ENCODE measurements at regions of chr5 and their contacts with region 1.

Region 1: DNA sequence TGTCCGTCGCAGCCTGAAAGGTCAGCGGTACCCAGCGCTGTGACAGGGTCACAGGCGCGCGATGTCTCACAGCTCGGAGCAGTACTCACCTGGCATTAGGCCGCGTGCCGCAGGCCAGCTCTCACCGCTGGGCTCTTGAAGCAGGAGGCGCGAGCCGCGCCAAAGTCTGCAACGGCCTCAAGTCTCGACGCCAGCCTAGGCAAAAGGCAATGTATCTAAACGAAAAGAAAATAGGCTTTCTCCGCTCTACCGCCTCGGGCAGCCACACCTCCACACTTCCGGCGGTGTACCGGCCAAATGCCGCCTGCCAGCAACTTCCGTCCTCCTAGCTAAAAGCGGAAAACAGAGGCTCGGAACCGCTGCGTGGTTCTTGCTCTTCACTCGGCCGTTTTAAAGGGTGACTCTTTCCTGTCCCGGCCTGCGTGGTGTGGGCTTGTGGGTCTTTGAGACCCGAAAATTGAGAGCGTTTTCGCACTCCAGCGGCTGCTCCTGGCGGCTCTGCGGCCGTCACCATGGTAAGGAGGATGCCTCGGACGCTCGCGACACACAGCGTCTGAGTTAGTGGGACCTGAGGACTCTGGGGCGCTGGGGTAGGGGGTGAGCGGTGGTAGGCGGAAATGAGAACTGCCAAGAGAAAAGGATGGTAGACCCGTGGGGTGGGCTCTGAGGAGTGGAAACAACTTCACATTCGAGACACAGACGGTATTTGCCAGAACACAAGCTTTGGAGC is at the starts of genes GFM2 and NSA2:
- DNase-seq: peak; percentile 91
- H3K4me3 ChIP-seq: peak within 1 kb of the TSS; percentile 59 to 99 (median 87)
- H3K27ac ChIP-seq: peak within 1 kb of the TSS; percentile 74
- H3K4me1 ChIP-seq: peaks cover 39% of the 10 kb centered on the region
- H3K27me3 ChIP-seq: no peaks in the 10 kb centered on the region
- CTCF ChIP-seq: no peak
- total RNA-seq, gene GFM2: 26.4 to 47.2 TPM
- total RNA-seq, gene NSA2: 38.2 to 66.6 TPM

Region 2: DNA sequence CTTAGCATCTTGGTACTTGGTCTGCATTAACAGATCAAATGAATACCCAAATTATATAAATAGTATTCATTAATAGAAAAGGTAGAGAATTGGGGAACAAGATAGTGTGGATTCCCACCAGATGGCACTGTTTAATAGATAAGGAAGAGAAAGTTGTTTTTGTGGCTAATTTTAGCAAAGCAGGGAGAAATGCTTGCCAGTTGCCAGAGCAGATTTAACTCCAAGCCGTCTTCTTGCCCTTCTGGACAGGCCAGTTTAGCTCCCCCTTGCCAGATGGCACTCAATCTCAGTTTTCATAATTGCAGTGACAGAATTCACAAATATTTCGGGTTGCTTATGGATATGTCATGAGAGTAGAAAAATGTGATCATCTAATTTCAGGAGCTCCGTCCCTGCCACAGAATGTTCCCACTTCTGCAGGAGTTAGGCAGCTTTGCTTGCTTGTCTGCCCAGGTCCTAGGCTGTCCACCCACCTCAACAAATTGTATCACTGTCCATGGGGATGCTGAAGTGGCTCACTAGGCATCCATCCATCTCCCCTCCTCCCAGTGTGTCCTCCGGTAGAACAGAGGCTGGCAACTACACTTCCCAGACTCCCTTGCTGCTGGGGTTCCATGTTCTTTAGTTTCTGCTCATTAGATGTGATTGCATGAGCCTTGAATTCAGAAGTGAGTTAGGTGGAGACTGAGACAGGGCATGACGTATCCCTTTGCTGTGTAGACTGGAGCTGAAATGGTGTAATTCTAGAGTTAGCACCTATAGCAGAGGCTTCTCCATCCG is 93.8 kb before region 1 on chr5:
- CTCF ChIA-PET with region 1: no interaction called
- dilution Hi-C with region 1: no loop called
- in situ Hi-C with region 1: no loop called
- intact Hi-C with region 1: loop called (anchors 2 kb)
- DNase-seq: no peak
- H3K4me3 ChIP-seq: no peak overlapping the region
- H3K27ac ChIP-seq: no peak overlapping the region
- H3K4me1 ChIP-seq: peaks cover 7% of the 10 kb centered on the region
- H3K27me3 ChIP-seq: no peaks in the 10 kb centered on the region
- CTCF ChIP-seq: peak in 1 of 2 donors; percentile 57

Region 3: DNA sequence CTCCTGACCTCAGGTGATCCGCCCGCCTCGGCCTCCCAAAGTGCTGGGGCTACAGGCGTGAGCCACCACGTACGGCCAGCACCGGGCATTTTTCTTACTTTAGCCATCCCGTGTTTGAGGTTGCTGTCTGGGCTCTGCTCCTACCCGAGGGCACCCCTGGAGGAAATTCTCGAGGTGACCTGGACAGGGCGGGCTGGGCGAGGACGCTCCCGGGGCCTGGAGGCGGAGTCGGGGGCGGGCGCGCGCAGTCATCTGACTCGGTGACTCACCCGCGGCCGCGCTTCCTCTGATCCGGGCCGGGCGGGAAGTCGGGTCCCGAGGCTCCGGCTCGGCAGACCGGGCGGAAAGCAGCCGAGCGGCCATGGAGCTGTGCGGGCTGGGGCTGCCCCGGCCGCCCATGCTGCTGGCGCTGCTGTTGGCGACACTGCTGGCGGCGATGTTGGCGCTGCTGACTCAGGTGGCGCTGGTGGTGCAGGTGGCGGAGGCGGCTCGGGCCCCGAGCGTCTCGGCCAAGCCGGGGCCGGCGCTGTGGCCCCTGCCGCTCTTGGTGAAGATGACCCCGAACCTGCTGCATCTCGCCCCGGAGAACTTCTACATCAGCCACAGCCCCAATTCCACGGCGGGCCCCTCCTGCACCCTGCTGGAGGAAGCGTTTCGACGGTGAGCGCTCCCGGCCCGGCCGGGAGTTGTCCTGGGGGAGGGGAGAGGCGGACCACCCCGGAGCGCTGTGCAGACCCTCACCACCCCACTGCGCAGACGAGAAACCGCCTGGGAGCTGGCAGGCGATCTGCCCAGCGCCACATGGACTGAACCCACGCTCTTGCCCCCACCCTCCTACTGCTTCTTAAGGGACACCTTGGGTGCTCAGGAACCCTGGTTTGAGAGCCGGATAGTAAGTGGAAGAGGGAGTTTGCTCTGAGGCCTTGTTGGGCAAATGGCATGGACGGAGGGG is 81.8 kb before region 1 on chr5 and contains the start of gene HEXB:
- CTCF ChIA-PET with region 1: no interaction called
- dilution Hi-C with region 1: no loop called
- in situ Hi-C with region 1: no loop called
- intact Hi-C with region 1: loop called (anchors 2 kb)
- DNase-seq: peak; percentile 85
- H3K4me3 ChIP-seq: peak within 1 kb of the TSS; percentile 74 to 90 (median 88)
- H3K27ac ChIP-seq: peak within 1 kb of the TSS; percentile 74
- H3K4me1 ChIP-seq: peaks cover 17% of the 10 kb centered on the region
- H3K27me3 ChIP-seq: no peaks in the 10 kb centered on the region
- CTCF ChIP-seq: no peak
- total RNA-seq, gene HEXB: 101 to 122 TPM

Region 4: DNA sequence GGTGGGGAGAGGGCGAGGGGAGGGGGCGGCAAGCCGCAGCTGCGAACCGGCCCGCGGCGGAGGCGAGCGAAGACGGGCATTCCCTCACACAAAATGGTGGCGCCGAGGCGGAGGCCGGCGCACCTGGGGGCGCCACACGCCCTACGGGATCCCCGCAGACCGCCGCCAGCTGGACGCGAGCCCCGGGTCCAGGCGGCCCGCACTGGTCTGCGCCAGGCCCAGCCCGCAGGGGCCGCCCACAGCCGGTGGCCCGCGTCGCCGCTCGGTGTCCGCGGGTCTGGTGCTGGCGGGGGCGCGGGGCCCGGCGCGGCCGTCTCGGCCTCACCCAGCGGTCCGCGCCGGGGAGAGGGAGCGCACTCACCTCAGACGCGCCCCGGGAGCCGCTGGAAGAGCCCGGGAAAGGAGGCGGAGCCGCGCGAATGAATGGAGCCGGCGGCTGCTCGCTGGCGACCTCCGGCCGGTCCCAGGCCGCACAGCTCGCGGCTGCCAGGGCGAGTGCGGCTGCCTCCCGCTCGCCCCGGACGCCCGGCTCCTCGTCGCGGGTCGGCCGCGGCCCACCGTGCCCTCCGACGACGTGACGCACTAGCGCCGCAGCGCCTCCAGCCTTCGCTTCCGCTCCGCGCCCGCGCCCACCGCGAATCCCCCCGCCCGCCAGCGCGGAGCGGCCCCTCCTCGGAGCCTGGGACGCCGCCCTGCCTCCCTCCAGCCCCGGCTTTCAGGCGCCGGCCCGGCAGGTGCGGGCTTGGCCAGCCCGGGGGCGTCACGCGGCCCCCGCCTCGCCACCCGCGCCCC is 99.0 kb after region 1 on chr5 and contains the start of gene FAM169A:
- CTCF ChIA-PET with region 1: no interaction called
- dilution Hi-C with region 1: loop called (anchors 10 kb)
- in situ Hi-C with region 1: no loop called
- intact Hi-C with region 1: loop called (anchors 2 kb)
- DNase-seq: peak; percentile 65
- H3K4me3 ChIP-seq: peak within 1 kb of the TSS; percentile 64 to 87 (median 77)
- H3K27ac ChIP-seq: peak within 1 kb of the TSS; percentile 60
- H3K4me1 ChIP-seq: peaks cover 36% of the 10 kb centered on the region
- H3K27me3 ChIP-seq: no peaks in the 10 kb centered on the region
- CTCF ChIP-seq: no peak
- total RNA-seq, gene FAM169A: 24.5 to 25.5 TPM

Region 5: DNA sequence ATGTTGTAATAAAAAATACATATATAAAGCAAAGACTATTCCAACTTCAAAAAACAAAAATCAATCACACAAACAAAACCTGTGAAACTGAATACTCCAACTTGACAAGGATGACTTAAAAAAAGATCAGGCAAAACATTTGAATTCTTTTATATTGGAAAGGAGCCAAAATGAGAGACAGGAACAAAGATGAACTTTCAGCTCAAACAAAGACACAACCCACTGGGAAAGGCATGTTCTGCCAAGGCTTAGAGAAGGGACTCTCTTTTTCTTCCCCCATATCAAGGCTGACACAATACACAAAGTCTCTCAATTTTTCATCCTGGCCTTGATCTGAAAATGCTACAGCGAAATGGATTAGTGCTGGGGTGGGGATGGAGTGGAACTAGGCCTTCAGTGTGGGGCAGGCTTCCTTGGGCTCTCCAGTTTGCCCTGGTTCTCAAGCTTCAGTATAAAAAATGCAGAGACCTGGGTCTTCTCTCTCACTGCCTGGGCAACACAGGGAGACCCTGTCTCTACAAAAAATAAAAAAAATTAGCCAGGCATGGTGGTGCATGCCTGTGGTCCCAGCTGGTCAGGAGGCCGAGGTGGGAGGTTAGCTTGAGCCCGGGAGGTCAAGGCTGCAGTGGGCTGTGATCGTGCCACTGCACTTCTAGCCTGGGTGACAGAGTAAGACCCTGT is 110.8 kb after region 1 on chr5:
- CTCF ChIA-PET with region 1: no interaction called
- dilution Hi-C with region 1: loop called (anchors 10 kb)
- in situ Hi-C with region 1: no loop called
- intact Hi-C with region 1: no loop called
- DNase-seq: no peak
- H3K4me3 ChIP-seq: no peak overlapping the region
- H3K27ac ChIP-seq: no peak overlapping the region
- H3K4me1 ChIP-seq: no peaks in the 10 kb centered on the region
- H3K27me3 ChIP-seq: no peaks in the 10 kb centered on the region
- CTCF ChIP-seq: no peak

Region 6: DNA sequence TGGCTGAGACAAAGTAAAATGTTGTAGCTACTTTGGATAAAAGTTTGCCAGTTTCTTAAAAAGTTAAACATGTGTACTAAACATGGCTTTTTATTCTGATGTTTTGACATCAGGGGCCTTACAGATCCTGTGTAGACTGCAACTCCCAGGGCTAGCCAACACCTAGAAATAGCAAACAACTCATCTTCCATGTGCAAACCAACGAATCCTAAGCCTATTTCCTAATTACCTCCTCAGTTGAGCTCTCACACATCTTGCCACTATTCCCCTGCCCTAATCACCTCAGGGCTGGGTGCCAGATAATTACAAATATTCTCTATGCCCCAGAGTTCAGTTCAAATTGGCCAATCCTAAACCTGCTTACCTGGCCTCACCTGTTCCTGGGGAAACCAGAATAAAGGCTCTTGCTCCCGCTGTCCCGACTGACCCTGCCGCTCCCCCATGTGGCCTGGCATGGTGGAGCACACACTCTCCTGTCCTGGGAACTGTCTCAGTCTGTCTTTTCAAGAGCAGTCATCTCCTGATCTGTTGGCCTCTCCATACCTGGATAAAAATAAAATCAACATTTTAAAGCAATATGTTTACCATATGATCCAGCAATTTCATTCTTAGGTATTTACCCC is 136.3 kb after region 1 on chr5:
- CTCF ChIA-PET with region 1: no interaction called
- dilution Hi-C with region 1: no loop called
- in situ Hi-C with region 1: no loop called
- intact Hi-C with region 1: loop called (anchors 1 kb)
- DNase-seq: peak; percentile 81
- H3K4me3 ChIP-seq: no peak overlapping the region
- H3K27ac ChIP-seq: no peak overlapping the region
- H3K4me1 ChIP-seq: peaks cover 6% of the 10 kb centered on the region
- H3K27me3 ChIP-seq: no peaks in the 10 kb centered on the region
- CTCF ChIP-seq: peak; percentile 89 to 97

Measured in mammary epithelial cell (primary cell).